ENCODE measurements at regions of chr1 and their contacts with region 1.

Region 1: DNA sequence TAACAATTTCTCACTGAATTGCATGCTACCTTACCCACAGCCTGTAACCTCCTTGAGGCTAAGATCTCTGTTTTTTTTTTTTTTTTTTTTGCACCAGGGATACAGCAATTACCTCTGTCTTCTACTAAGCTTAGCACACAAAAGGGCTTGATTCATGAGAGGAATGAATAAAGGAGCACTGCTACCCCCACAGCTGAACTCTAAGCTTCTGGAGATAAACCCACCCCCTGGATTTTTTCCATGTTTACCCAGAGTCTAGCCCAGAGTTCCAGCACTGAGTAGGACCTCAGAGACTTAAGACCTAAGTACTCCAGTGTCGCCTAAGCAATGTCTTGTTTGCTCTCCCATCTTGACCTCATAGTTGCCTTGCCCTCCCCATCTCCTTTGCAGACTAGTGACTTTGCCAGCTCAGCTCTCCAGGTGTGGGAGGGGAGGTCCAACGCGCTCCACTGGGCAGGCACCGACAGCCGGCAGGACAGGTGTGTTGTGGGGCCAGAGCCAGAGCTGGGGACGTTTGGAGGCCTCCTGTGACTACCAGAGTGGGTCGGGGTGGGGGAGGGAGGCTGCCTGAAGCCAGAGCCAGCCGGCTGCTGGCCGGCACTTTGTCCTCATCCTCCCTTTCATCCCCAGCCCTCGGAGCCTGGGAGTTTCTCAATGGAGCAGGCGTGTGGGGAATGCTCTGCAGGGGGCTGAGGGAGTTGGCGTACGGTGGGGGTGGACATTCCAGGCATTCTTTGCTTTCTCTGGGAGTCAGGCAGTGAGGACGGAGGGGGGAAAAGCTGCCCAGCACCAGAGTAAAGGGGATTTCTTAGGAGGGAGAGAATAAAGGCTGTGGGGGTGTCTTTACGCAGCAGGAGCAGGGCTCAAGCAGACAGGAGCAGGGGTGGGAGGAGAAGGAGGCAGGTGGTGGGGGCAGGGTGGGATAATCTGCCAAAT is 20.4 kb downstream of the NUAK2 start:
- DNase-seq: peak; percentile 97 to 99
- H3K4me3 ChIP-seq: peak overlapping the region; percentile 5; the same call in 1 of the 2 replicates
- H3K4me3 Mint-ChIP-seq: peak overlapping the region; percentile 56
- H3K27ac Mint-ChIP-seq: peak overlapping the region; percentile 97
- H3K4me1 ChIP-seq: peaks cover 76% of the 10 kb centered on the region
- H3K4me1 Mint-ChIP-seq: peaks cover 58% of the 10 kb centered on the region
- H3K27me3 ChIP-seq: no peaks in the 10 kb centered on the region
- H3K27me3 Mint-ChIP-seq: no peaks in the 10 kb centered on the region
- CTCF ChIP-seq: no peak

Region 2: GRCh38 chr1:205111354-205111753 is 189.8 kb before region 1 on chr1:
- CTCF ChIA-PET with region 1: no interaction called
- POLR2A ChIA-PET with region 1: no interaction called
- intact Hi-C with region 1: no loop called
- DNase-seq: no peak
- H3K4me3 ChIP-seq: no peak overlapping the region
- H3K4me3 Mint-ChIP-seq: no peak overlapping the region
- H3K27ac Mint-ChIP-seq: no peak overlapping the region
- H3K4me1 ChIP-seq: no peaks in the 10 kb centered on the region
- H3K4me1 Mint-ChIP-seq: no peaks in the 10 kb centered on the region
- H3K27me3 ChIP-seq: no peaks in the 10 kb centered on the region
- H3K27me3 Mint-ChIP-seq: no peaks in the 10 kb centered on the region
- CTCF ChIP-seq: no peak

Region 3: GRCh38 chr1:205284343-205285144 is 16.6 kb before region 1 on chr1:
- CTCF ChIA-PET with region 1: interaction called, 21 read pairs
- POLR2A ChIA-PET with region 1: interaction called, 22 read pairs
- intact Hi-C with region 1: loop called (anchors 1 kb)
- DNase-seq: peak; percentile 95 to 98
- H3K4me3 ChIP-seq: no peak overlapping the region
- H3K4me3 Mint-ChIP-seq: peak overlapping the region; percentile 38
- H3K27ac Mint-ChIP-seq: peak overlapping the region; percentile 69
- H3K4me1 ChIP-seq: peaks cover 35% of the 10 kb centered on the region
- H3K4me1 Mint-ChIP-seq: peaks cover 41% of the 10 kb centered on the region
- H3K27me3 ChIP-seq: no peaks in the 10 kb centered on the region
- H3K27me3 Mint-ChIP-seq: no peaks in the 10 kb centered on the region
- CTCF ChIP-seq: peak in 1 of 2 experiments; percentile 28

Region 4: GRCh38 chr1:205680073-205680851 is 379.1 kb after region 1 on chr1 and contains the start of gene SLC45A3:
- CTCF ChIA-PET with region 1: interaction called, 10 read pairs
- POLR2A ChIA-PET with region 1: no interaction called
- intact Hi-C with region 1: no loop called
- DNase-seq: peak; percentile 39 to 44
- H3K4me3 ChIP-seq: peak within 1 kb of the TSS; percentile 85
- H3K4me3 Mint-ChIP-seq: peak within 1 kb of the TSS; percentile 84
- H3K27ac Mint-ChIP-seq: peak within 1 kb of the TSS; percentile 42
- H3K4me1 ChIP-seq: peaks cover 28% of the 10 kb centered on the region
- H3K4me1 Mint-ChIP-seq: peaks cover 33% of the 10 kb centered on the region
- H3K27me3 ChIP-seq: no peaks in the 10 kb centered on the region
- H3K27me3 Mint-ChIP-seq: no peaks in the 10 kb centered on the region
- CTCF ChIP-seq: no peak
- total RNA-seq, gene SLC45A3: 5.5 TPM in 2 replicates

Measured in Caco-2 (cell line).